ENCODE measurements at regions of chr2 and their contacts with region 1.

Region 1: DNA sequence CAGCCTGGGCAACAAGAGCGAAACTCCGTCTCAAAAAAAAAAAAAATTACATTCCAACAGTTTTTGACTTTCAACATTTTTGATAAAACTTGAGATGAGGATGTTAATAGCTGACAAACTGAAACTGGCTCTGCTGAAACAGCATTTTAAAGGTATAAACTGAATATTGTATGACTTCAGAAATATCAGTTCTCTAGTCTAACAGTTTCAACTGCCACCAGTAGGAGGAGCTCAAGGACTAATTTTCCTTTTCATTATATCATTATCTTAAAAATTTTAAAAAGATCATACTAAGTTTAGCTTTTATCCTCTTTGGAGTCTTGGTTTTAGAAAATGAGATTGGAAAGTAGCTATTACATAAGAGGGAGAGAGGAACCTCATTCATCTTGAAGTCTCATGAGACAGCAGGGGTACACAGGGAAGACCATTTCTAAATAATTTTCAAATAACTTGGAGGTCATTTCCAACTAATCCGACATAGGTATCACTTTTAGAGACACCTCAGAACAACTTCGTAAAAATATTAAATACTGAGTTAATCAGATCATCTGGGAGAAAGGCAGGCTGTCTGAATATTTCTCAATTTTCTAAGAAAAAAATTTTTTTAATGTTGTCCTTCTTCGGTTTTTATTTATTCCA is 37.6 kb upstream of the MCM6 start:
- DNase-seq: peak; percentile 49

Region 2: GRCh38 chr2:136384531-136385303 is 470.9 kb after region 1 on chr2:
- in situ Hi-C with region 1: loop called (anchors 10 kb)
- DNase-seq: peak; percentile 57

Measured in KBM-7 (cell line).